Endothelial cell of umbilical vein (primary cell): ENCODE measurements at regions of chr2 and their contacts with region 1.

Region 1: GRCh38 chr2:160603771-160604510 is 110.3 kb upstream of the RBMS1 start:
- DNase-seq: peak; percentile 63
- H3K4me3 ChIP-seq: no peak overlapping the region
- H3K27ac ChIP-seq: no peak overlapping the region
- H3K4me1 ChIP-seq: peaks cover 8% of the 10 kb centered on the region
- H3K27me3 ChIP-seq: no peaks in the 10 kb centered on the region
- CTCF ChIP-seq: no peak
- POLR2A ChIP-seq: no peak

Region 2: DNA sequence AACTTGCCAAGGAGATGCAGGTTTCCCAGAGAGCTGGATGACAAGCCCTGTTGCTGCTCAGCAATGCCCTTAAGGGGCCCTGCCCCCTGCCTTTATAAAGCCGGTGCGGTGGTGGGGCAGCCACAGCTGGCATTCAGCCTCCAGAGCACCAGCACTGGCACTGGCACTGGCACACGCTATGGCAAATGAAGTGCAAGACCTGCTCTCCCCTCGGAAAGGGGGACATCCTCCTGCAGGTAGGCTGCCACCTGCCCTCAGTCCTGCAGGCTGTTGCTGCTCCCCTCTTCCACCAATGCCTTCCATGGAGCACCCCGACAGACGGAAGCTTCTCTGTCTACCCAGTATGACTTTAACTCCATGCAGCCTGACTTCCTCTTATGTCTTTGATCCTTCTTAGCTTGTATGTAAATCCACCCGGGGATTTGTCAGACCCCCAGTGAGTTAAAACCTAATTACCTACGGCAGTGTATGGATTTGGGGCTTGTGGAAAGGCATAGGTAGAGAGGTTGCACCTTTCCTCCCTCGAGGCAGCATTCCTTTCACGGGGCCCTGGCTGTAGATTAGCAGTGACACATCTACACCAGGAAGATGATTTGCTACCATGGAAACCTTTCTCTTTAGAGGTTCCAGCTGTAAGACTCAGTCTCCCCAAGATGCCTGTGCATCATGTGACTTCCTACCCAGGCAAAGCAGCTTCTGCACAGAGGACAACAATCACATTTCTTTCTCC is 1808.6 kb before region 1 on chr2 and contains the start of gene DAPL1:
- CTCF ChIA-PET with region 1: no interaction called
- POLR2A ChIA-PET with region 1: no interaction called
- dilution Hi-C with region 1: no loop called
- intact Hi-C with region 1: loop called (anchors 5 kb)
- DNase-seq: no peak
- H3K4me3 ChIP-seq: no peak within 1 kb of the TSS
- H3K27ac ChIP-seq: no peak within 1 kb of the TSS
- H3K4me1 ChIP-seq: no peaks in the 10 kb centered on the region
- H3K27me3 ChIP-seq: peaks cover 12 to 16% of the 10 kb centered on the region in 2 experiments
- CTCF ChIP-seq: no peak
- POLR2A ChIP-seq: no peak
- total RNA-seq, gene DAPL1: not detected in 2 replicates

Region 3: GRCh38 chr2:160353166-160353565 is 250.8 kb before region 1 on chr2:
- CTCF ChIA-PET with region 1: no interaction called
- POLR2A ChIA-PET with region 1: no interaction called
- dilution Hi-C with region 1: no loop called
- intact Hi-C with region 1: no loop called
- DNase-seq: peak; percentile 38
- H3K4me3 ChIP-seq: no peak overlapping the region
- H3K27ac ChIP-seq: no peak overlapping the region
- H3K4me1 ChIP-seq: peaks cover 3% of the 10 kb centered on the region
- H3K27me3 ChIP-seq: no peaks in the 10 kb centered on the region
- CTCF ChIP-seq: peak; percentile 28 to 31
- POLR2A ChIP-seq: no peak

Region 4: GRCh38 chr2:160367887-160368286 is 236.1 kb before region 1 on chr2:
- CTCF ChIA-PET with region 1: no interaction called
- POLR2A ChIA-PET with region 1: no interaction called
- dilution Hi-C with region 1: no loop called
- intact Hi-C with region 1: no loop called
- DNase-seq: no peak
- H3K4me3 ChIP-seq: no peak overlapping the region
- H3K27ac ChIP-seq: no peak overlapping the region
- H3K4me1 ChIP-seq: peaks cover 46% of the 10 kb centered on the region
- H3K27me3 ChIP-seq: no peaks in the 10 kb centered on the region
- CTCF ChIP-seq: no peak
- POLR2A ChIP-seq: no peak

Region 5: DNA sequence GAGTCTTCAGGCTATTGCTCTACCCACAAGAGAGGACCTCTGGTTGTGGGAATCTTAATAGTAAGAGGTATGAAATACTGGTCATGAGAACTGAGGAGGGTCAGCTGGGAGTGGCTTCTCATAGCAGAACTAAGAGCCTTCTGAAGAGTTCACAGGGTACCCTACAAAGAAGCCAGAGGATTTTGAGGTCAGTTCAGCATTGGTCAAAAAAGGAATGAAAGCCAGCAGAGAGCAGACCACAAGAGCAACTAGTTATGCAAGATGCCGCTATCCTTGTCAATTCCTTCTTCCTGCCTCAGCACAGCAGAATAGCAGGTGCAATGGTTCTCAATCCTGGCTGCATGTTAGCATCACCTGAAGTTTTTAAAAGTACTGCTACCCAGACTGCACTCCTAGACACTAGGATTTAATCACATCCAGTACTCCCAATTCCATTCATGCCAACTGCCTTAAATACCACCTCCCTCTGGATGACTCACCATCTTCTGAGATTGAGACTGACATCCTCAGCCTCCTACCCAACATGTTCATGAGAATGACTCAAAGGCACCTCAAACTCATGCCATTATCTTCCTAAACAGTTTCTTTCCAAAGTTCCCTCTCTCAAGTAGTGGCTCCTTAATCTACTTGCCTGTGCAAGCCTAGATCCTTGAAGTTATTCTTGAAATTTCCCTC is 29.3 kb before region 1 on chr2:
- CTCF ChIA-PET with region 1: no interaction called
- POLR2A ChIA-PET with region 1: no interaction called
- dilution Hi-C with region 1: no loop called
- intact Hi-C with region 1: no loop called
- DNase-seq: no peak
- H3K4me3 ChIP-seq: no peak overlapping the region
- H3K27ac ChIP-seq: no peak overlapping the region
- H3K4me1 ChIP-seq: no peaks in the 10 kb centered on the region
- H3K27me3 ChIP-seq: no peaks in the 10 kb centered on the region
- CTCF ChIP-seq: no peak
- POLR2A ChIP-seq: no peak

Region 6: DNA sequence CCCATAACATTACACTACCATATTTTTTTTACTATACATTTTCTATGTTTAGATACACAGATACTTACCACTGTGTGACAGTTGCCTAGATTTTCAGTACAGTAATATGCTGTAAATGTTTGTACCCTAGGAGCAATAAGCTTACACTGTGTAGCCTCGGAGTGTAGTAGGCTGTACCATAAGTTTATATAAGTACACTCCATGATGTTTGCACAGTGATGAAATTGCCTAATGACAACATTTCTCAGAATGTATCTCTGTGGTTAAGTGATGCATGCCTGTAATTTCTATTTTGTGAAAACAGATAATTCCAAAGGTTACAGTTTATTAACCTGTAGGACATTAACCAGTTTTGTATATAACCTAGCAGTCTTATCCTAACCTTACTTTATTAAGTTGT is 17.8 kb after region 1 on chr2:
- CTCF ChIA-PET with region 1: no interaction called
- POLR2A ChIA-PET with region 1: no interaction called
- dilution Hi-C with region 1: no loop called
- intact Hi-C with region 1: no loop called
- DNase-seq: no peak
- H3K4me3 ChIP-seq: no peak overlapping the region
- H3K27ac ChIP-seq: no peak overlapping the region
- H3K4me1 ChIP-seq: no peaks in the 10 kb centered on the region
- H3K27me3 ChIP-seq: no peaks in the 10 kb centered on the region
- CTCF ChIP-seq: no peak
- POLR2A ChIP-seq: no peak